Calu3 (cell line): ENCODE measurements at regions of chr11 and their contacts with region 1.

Region 1: DNA sequence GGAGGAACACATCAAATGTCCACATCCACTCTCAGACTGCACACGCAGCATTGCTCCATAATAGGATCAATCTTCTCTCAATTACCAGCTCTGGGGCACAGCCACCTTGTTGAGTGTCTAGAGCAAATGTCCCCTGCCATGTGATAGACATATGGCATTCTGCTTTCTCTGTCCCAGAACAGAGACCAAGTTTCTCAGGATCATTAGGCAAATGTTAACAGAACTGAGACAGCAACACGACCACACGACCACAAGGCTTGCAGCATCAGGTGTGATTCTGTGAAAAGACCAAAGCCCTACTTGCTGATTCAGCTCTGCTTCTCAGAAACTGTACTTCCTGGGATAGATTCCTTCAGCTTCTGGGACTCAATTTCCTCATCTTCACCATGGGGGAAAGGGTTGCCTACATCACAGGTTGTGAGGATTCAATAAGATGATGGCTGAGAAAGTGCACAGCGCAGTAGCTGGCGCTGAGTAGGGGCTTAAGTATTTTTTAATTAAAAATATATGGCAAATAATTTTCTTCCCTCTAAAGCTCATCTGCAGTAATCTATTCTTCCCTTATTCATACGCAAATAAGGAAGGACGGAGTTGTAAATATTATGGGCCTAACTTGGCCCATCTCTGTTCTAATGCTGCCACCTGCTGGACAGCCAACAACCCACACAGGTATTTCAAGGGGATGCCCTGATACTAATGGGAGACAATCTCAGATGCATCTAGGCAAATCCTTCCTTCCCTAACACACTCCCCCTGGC is 54.3 kb upstream of the USP47 start:
- DNase-seq: peak; percentile 75
- H3K4me3 Mint-ChIP-seq: no peak overlapping the region
- H3K27ac Mint-ChIP-seq: no peak overlapping the region
- H3K4me1 Mint-ChIP-seq: peaks cover 16% of the 10 kb centered on the region
- H3K27me3 Mint-ChIP-seq: peaks cover 18% of the 10 kb centered on the region
- CTCF ChIP-seq: peak; percentile 79

Region 2: DNA sequence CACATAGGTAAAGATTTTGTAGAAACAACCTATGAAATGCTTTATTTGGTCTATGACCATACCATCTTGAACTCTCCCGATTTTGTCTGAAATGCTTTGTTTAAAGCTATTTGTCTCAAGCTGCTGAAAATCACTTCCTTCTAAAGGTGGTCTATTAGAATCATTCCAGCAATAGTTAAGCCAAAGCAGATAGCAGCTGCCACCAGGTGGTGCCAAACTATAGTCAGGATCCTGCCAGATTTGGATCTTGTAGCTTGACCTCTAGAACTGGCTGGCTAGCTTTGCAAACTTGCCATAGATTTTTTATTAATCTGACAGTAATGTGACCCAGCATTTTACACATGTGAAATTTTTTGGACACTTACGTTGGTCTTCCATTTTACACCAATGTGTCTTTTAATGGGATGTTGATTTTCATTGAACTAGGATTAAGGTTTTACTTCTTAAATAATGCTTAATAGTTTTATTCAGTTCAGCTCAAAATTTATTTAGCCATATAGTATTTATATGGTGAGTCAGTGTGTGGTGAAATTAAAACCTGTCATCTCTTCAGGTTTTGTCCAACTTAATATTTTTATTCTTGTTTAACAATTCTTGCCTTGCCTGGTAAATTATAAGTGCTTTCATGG is 1016.7 kb before region 1 on chr11:
- CTCF ChIA-PET with region 1: interaction called, 3 read pairs
- intact Hi-C with region 1: loop called (anchors 5 kb)
- DNase-seq: peak; percentile 67
- H3K4me3 Mint-ChIP-seq: no peak overlapping the region
- H3K27ac Mint-ChIP-seq: no peak overlapping the region
- H3K4me1 Mint-ChIP-seq: no peaks in the 10 kb centered on the region
- H3K27me3 Mint-ChIP-seq: no peaks in the 10 kb centered on the region
- CTCF ChIP-seq: peak; percentile 59

Region 3: GRCh38 chr11:10933455-10934292 is 853.8 kb before region 1 on chr11:
- CTCF ChIA-PET with region 1: interaction called, 10 read pairs
- intact Hi-C with region 1: loop called (anchors 5 kb)
- DNase-seq: peak; percentile 91
- H3K4me3 Mint-ChIP-seq: peak overlapping the region; percentile 76
- H3K27ac Mint-ChIP-seq: peak overlapping the region; percentile 68
- H3K4me1 Mint-ChIP-seq: peaks cover 35% of the 10 kb centered on the region
- H3K27me3 Mint-ChIP-seq: no peaks in the 10 kb centered on the region
- CTCF ChIP-seq: peak; percentile 88

Region 4: DNA sequence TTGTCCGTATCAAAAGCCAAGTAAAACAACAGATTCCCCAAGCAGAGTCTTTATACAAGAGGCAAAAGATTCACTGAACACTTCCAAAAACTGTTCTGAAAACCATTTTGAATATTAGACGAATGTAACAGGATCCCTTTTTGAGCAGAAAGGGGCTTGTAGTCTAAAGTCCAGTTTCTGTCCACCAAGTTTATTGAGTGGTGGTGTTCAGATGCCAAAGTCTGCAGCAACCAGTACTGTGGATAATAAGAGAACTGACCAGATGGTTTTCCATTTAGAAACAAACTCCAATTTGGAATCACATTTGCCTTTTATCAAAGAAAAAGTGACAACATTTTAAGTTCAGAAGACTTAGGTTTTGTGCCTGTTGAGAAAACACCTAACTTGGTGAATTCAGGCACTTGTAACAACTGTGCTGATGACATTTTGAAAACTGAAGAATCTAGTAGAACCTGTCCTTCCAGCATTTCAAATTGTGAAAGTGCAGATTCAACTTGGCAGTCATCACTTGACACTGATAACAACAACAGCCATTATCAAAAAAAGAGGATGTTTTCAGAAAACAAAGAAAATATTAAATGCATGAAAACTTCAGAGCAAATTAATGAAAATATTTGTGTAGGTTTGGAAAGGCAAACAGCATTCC is 651.5 kb before region 1 on chr11:
- CTCF ChIA-PET with region 1: no interaction called
- intact Hi-C with region 1: loop called (anchors 5 kb)
- DNase-seq: no peak
- H3K4me3 Mint-ChIP-seq: no peak overlapping the region
- H3K27ac Mint-ChIP-seq: no peak overlapping the region
- H3K4me1 Mint-ChIP-seq: peaks cover 8% of the 10 kb centered on the region
- H3K27me3 Mint-ChIP-seq: no peaks in the 10 kb centered on the region
- CTCF ChIP-seq: no peak

Region 5: GRCh38 chr11:11335043-11335442 is 452.4 kb before region 1 on chr11:
- CTCF ChIA-PET with region 1: no interaction called
- intact Hi-C with region 1: loop called (anchors 1 kb)
- DNase-seq: no peak
- H3K4me3 Mint-ChIP-seq: no peak overlapping the region
- H3K27ac Mint-ChIP-seq: no peak overlapping the region
- H3K4me1 Mint-ChIP-seq: no peaks in the 10 kb centered on the region
- H3K27me3 Mint-ChIP-seq: no peaks in the 10 kb centered on the region
- CTCF ChIP-seq: no peak

Region 6: GRCh38 chr11:11519184-11519583 is 268.3 kb before region 1 on chr11:
- CTCF ChIA-PET with region 1: no interaction called
- intact Hi-C with region 1: no loop called
- DNase-seq: no peak
- H3K4me3 Mint-ChIP-seq: no peak overlapping the region
- H3K27ac Mint-ChIP-seq: no peak overlapping the region
- H3K4me1 Mint-ChIP-seq: no peaks in the 10 kb centered on the region
- H3K27me3 Mint-ChIP-seq: no peaks in the 10 kb centered on the region
- CTCF ChIP-seq: no peak

Region 7: GRCh38 chr11:11621573-11622319 is 165.7 kb before region 1 on chr11 and contains the start of gene GALNT18:
- CTCF ChIA-PET with region 1: interaction called, 4 read pairs
- intact Hi-C with region 1: loop called (anchors 5 kb)
- DNase-seq: peak; percentile 97
- H3K4me3 Mint-ChIP-seq: peak within 1 kb of the TSS; percentile 96
- H3K27ac Mint-ChIP-seq: peak within 1 kb of the TSS; percentile 30
- H3K4me1 Mint-ChIP-seq: peaks cover 22% of the 10 kb centered on the region
- H3K27me3 Mint-ChIP-seq: no peaks in the 10 kb centered on the region
- CTCF ChIP-seq: peak; percentile 50
- total RNA-seq, gene GALNT18: 9.2 and 9.9 TPM in 2 replicates

Region 8: DNA sequence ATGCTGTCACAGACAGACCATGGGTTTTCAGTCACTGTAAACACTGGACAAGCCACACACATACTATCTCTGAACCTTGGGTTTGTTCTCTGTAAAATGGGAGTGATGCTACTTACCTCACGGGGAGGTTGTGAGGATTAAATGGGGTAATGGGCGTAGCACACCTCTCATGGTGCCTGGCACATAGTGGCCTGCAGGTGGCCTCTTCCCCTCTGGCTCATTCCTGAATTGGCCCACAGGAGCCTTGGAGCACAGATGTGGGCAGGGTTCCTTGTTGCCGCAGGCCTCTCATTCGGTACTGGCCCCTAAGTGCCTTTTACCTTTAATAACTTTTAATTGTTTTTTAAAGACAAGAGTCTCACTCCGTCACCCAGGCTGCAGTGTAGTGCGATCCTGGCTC is 334.6 kb after region 1 on chr11:
- CTCF ChIA-PET with region 1: no interaction called
- intact Hi-C with region 1: no loop called
- DNase-seq: peak; percentile 31
- H3K4me3 Mint-ChIP-seq: no peak overlapping the region
- H3K27ac Mint-ChIP-seq: no peak overlapping the region
- H3K4me1 Mint-ChIP-seq: peaks cover 68% of the 10 kb centered on the region
- H3K27me3 Mint-ChIP-seq: no peaks in the 10 kb centered on the region
- CTCF ChIP-seq: peak; percentile 33

Region 9: GRCh38 chr11:12281571-12282478 is 494.3 kb after region 1 on chr11:
- CTCF ChIA-PET with region 1: no interaction called
- intact Hi-C with region 1: loop called (anchors 5 kb)
- DNase-seq: peak; percentile 82
- H3K4me3 Mint-ChIP-seq: no peak overlapping the region
- H3K27ac Mint-ChIP-seq: no peak overlapping the region
- H3K4me1 Mint-ChIP-seq: peaks cover 31% of the 10 kb centered on the region
- H3K27me3 Mint-ChIP-seq: no peaks in the 10 kb centered on the region
- CTCF ChIP-seq: peak; percentile 91